ENCODE measurements at regions of chr1 and their contacts with region 1.

Region 1: DNA sequence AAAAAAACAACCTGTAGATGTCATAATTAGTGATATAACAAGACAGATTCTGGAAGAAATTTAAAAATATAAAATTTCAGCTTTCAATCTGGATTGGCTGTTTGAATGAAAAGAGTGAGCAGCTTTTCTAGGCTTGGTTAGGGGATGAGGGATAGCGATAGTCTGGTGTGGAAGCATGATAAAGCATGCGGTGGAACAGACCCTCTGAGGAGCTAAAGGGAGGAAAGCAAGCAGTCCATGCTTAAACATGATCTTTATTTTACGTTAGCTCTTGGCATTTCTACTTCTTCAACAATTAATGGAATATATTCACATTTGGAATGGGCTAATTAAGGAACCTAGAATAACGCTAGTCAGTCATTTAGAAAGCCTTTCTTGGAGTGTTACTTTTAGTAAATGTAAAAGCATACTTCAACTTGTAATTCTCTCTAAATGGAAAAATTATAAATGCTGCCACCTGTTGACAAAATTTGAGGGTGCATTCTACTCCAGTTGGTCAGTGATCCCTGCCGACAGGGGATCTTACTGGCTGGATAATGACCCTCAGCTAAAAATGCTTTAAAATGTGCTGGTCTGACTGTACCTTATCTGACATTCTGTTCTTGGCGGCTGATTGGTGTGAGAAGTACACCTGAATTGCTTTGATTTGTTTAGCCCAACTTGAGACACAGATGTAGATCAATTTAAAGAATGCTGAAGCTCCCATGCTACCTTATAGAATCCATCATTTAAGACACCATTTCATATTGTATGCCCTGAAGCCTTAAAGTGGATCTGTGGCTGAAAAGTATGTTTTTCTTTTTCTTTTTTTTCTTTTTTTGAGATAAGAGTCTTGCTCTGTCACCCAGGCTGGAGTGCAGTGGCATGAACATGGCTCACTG is 61.2 kb downstream of the AK4 start:
- DNase-seq: peak; percentile 20
- ATAC-seq: no peak
- H3K4me3 Mint-ChIP-seq: no peak overlapping the region
- H3K27ac Mint-ChIP-seq: no peak overlapping the region
- H3K4me1 Mint-ChIP-seq: peaks cover 25% of the 10 kb centered on the region
- H3K27me3 Mint-ChIP-seq: peaks cover 4% of the 10 kb centered on the region

Region 2: DNA sequence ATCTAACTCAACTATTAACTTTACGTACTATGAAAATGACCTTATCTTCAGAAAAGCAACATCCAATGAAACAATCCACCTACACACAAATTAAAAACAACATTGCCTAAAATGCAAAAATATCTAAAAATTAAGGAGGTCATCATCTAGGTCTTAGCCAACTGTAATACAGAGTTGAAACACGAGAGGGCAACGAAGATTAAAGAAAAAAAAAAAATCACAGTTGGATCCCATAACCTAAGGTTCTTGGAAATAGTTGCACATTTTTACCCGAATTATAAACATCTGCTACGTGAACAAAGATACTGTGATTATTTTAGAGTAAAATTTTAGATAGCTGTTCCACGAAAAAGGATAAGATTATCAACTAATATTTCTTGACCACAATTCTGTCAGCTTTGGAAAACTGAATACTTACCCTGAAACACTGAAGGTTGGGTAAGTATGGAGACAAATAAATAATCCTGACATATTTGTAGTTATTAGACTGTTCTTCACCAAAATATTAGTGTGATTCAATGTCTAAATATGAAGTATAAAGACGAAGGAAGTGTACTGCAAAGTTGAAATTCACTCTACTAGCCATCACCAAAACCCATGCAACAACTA is 149.2 kb before region 1 on chr1:
- CTCF ChIA-PET with region 1: interaction called, 7 read pairs
- POLR2A ChIA-PET with region 1: no interaction called
- intact Hi-C with region 1: loop called (anchors 2 to 5 kb)
- DNase-seq: no peak
- ATAC-seq: no peak
- H3K4me3 Mint-ChIP-seq: no peak overlapping the region
- H3K27ac Mint-ChIP-seq: no peak overlapping the region
- H3K4me1 Mint-ChIP-seq: peaks cover 51% of the 10 kb centered on the region
- H3K27me3 Mint-ChIP-seq: no peaks in the 10 kb centered on the region

Measured in activated CD4-positive, alpha-beta T cell treated with anti-CD3 and anti-CD28 coated beads for 36 hours (primary cell).